ENCODE measurements at regions of chr7 and their contacts with region 1.

Region 1: GRCh38 chr7:132580717-132581285 is 4.5 kb upstream of the PLXNA4 start:
- DNase-seq: peak; percentile 67 to 84 (median 78)
- H3K4me3 ChIP-seq: no peak overlapping the region
- H3K27ac ChIP-seq: no peak overlapping the region
- H3K4me1 ChIP-seq: no peaks in the 10 kb centered on the region
- H3K27me3 ChIP-seq: no peaks in the 10 kb centered on the region
- CTCF ChIP-seq: peak; percentile 55 to 80 (median 73)
- EP300 ChIP-seq: no peak
- POLR2A ChIP-seq: no peak

Region 2: GRCh38 chr7:131688738-131689661 is 891.8 kb before region 1 on chr7:
- intact Hi-C with region 1: loop called (anchors 5 to 10 kb)
- DNase-seq: peak; percentile 40 to 79 (median 58)
- H3K4me3 ChIP-seq: no peak overlapping the region
- H3K27ac ChIP-seq: no peak overlapping the region
- H3K4me1 ChIP-seq: peaks cover 2% of the 10 kb centered on the region
- H3K27me3 ChIP-seq: no peaks in the 10 kb centered on the region
- CTCF ChIP-seq: peak; percentile 43 to 74 (median 72)
- EP300 ChIP-seq: no peak
- POLR2A ChIP-seq: no peak

Region 3: GRCh38 chr7:131945313-131945911 is 635.4 kb before region 1 on chr7:
- intact Hi-C with region 1: loop called (anchors 2 to 10 kb)
- DNase-seq: peak; percentile 17 to 68 (median 27)
- H3K4me3 ChIP-seq: no peak overlapping the region
- H3K27ac ChIP-seq: no peak overlapping the region
- H3K4me1 ChIP-seq: peaks cover 3% of the 10 kb centered on the region
- H3K27me3 ChIP-seq: no peaks in the 10 kb centered on the region
- CTCF ChIP-seq: peak in 2 of 3 donors; percentile 51 to 72
- EP300 ChIP-seq: no peak
- POLR2A ChIP-seq: no peak

Region 4: DNA sequence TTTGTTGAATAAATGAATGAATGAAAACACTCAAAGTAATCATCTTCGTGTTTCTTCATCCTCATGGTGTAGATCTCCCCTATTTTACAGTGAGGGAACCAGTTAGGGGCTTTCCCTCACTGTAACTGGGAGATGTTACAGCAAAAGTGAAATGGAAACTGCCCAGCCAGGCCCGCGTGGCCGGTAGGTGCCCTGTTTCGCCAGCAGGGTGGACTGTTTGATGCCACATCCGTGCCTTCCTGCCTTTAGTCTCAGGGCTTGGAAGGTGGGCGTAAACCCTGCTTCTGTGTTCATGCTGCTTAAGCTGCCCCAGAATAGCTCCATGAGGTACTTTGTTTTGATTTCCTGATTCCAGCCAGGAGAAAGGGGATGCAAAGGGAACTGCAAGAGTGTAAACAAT is 273.3 kb before region 1 on chr7:
- intact Hi-C with region 1: loop called in 1 of 4 experiments (anchors 5 kb)
- DNase-seq: no peak
- H3K4me3 ChIP-seq: no peak overlapping the region
- H3K27ac ChIP-seq: no peak overlapping the region
- H3K4me1 ChIP-seq: no peaks in the 10 kb centered on the region
- H3K27me3 ChIP-seq: no peaks in the 10 kb centered on the region
- CTCF ChIP-seq: no peak
- EP300 ChIP-seq: no peak
- POLR2A ChIP-seq: no peak

Region 5: DNA sequence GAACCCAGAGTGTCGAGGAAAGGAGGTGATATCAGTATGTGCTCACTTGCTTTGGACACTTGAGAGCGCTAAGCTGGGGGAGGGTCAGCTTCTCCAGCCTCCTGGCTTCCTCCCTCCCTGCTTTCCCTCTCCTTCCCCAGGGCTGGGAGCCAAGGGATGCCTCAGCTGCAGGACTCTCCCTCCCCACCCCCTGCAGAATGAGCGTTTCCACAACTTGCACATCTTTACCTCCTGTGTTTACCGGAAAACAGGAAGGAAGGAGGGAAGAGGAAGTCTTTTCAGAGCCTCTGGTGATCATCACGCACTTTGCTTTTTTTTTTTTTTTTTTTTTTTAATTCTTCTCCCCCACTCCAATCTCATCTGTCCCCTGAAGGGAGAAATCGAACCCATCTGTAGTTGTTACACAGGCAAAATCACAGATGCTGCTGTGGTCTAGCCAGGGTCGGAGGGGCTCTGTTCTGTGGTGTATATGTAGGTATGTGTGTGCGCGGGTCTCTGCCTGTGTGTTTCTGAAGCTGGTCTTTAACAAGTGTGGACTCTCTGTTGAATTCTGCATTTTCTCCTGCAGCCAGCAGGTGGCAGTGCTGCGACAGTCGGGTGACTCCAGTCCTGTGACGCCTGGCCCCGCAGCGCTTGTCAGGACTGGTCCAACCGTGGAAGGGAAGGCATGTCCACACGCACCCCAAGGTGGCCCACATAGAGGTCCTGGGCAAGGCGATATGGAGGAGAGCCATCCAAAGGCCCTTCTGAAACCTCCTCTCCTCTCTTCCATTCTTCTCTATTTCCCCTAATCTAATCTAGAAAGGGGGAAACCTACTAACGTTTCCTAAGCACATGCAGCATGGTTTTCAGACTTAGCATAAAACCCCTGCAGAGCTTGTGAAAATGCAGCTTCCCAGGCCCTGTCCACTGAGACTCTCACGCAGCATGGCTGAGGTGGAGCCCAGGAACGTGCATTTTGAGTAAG is 262.2 kb before region 1 on chr7:
- intact Hi-C with region 1: loop called in 3 of 4 experiments (anchors 2 to 5 kb)
- DNase-seq: peak; percentile 78 to 92 (median 87)
- H3K4me3 ChIP-seq: no peak overlapping the region
- H3K27ac ChIP-seq: no peak overlapping the region
- H3K4me1 ChIP-seq: peaks cover 3% of the 10 kb centered on the region
- H3K27me3 ChIP-seq: no peaks in the 10 kb centered on the region
- CTCF ChIP-seq: peak; percentile 85 to 90 (median 87)
- EP300 ChIP-seq: no peak
- POLR2A ChIP-seq: no peak

Region 6: DNA sequence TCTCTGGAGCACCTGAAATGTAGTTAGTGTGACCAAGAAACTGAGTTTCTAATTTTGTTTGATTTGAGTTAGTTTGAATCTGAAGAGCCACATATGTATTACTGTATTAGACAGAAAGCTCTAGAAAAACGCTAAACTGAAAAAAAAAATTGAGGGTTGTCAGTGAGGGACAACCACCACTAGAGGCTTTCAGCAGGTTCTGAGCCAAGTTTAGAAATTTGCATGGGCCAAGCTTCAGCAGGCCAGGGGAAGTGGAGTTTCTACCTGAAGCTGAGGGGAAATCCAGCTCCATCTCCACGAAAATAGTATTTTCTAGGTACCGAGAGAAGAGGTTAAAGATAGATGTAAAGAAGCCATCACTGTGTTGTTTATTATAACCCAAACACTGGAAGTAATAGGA is 73.3 kb after region 1 on chr7:
- intact Hi-C with region 1: no loop called
- DNase-seq: no peak
- H3K4me3 ChIP-seq: no peak overlapping the region
- H3K27ac ChIP-seq: no peak overlapping the region
- H3K4me1 ChIP-seq: no peaks in the 10 kb centered on the region
- H3K27me3 ChIP-seq: no peaks in the 10 kb centered on the region
- CTCF ChIP-seq: no peak
- EP300 ChIP-seq: no peak
- POLR2A ChIP-seq: no peak

Region 7: GRCh38 chr7:132793474-132793873 is 212.7 kb after region 1 on chr7:
- intact Hi-C with region 1: no loop called
- DNase-seq: no peak
- H3K4me3 ChIP-seq: no peak overlapping the region
- H3K27ac ChIP-seq: no peak overlapping the region
- H3K4me1 ChIP-seq: no peaks in the 10 kb centered on the region
- H3K27me3 ChIP-seq: no peaks in the 10 kb centered on the region
- CTCF ChIP-seq: no peak
- EP300 ChIP-seq: no peak
- POLR2A ChIP-seq: no peak

Region 8: DNA sequence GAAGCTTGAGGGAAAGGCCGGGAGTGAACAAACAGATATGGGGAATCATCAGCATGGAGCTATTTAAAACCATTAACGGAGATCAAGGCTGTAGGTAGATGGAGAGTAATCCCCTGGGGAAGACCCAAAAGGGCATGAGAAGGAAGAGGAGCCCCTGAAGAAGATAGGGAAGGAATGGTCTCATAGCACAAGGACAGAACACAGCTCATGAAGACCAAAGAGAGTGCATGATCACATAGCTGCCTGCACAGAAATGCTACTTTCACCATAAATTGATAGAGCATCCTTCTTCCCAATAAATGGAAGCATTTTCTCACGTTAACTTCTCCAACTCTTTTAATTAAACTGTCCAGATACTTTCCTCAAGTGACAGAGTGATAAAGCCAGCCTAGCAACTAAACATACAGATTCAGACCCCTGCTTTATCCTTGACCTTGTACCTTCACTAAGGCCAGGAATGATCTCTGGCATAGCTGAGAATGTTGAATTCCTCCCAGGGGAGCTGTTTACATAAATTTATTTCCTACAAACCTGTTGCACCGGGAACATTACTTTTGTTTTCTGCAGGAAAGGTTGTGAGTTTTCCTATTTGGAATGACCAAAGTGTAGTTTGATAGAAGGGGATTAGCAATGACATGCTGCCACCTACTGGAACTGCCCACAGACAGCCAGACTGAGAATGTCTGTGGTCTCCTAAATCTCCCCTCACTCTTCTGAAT is 1435.6 kb after region 1 on chr7:
- intact Hi-C with region 1: loop called in 1 of 4 experiments (anchors 10 kb)
- DNase-seq: peak in 4 of 5 donors; percentile 10 to 24 (median 18)
- H3K4me3 ChIP-seq: no peak overlapping the region
- H3K27ac ChIP-seq: no peak overlapping the region
- H3K4me1 ChIP-seq: no peaks in the 10 kb centered on the region
- H3K27me3 ChIP-seq: no peaks in the 10 kb centered on the region
- CTCF ChIP-seq: peak in 1 of 3 donors; percentile 13
- EP300 ChIP-seq: no peak
- POLR2A ChIP-seq: no peak